CD8-positive, alpha-beta T cell (primary cell): ENCODE measurements at regions of chr3 and their contacts with region 1.

Region 1: GRCh38 chr3:183680061-183680460 is 17.5 kb upstream of the YEATS2 start:
- DNase-seq: no peak
- ATAC-seq: no peak
- H3K4me3 ChIP-seq: no peak overlapping the region
- H3K4me3 Mint-ChIP-seq: no peak overlapping the region
- H3K27ac ChIP-seq: no peak overlapping the region
- H3K27ac Mint-ChIP-seq: no peak overlapping the region
- H3K4me1 ChIP-seq: no peaks in the 10 kb centered on the region
- H3K4me1 Mint-ChIP-seq: no peaks in the 10 kb centered on the region
- H3K27me3 ChIP-seq: no peaks in the 10 kb centered on the region
- H3K27me3 Mint-ChIP-seq: no peaks in the 10 kb centered on the region
- CTCF ChIP-seq: no peak

Region 2: GRCh38 chr3:183718012-183718411 is 38.0 kb after region 1 on chr3:
- CTCF ChIA-PET with region 1: no interaction called
- POLR2A ChIA-PET with region 1: no interaction called
- intact Hi-C with region 1: loop called in 1 of 2 experiments (anchors 1 kb)
- DNase-seq: no peak
- ATAC-seq: no peak
- H3K4me3 ChIP-seq: no peak overlapping the region
- H3K4me3 Mint-ChIP-seq: no peak overlapping the region
- H3K27ac ChIP-seq: no peak overlapping the region
- H3K27ac Mint-ChIP-seq: no peak overlapping the region
- H3K4me1 ChIP-seq: no peaks in the 10 kb centered on the region
- H3K4me1 Mint-ChIP-seq: no peaks in the 10 kb centered on the region
- H3K27me3 ChIP-seq: no peaks in the 10 kb centered on the region
- H3K27me3 Mint-ChIP-seq: no peaks in the 10 kb centered on the region
- CTCF ChIP-seq: no peak